AG04449 (cell line): ENCODE measurements at regions of chr19 and their contacts with region 1.

Region 1: DNA sequence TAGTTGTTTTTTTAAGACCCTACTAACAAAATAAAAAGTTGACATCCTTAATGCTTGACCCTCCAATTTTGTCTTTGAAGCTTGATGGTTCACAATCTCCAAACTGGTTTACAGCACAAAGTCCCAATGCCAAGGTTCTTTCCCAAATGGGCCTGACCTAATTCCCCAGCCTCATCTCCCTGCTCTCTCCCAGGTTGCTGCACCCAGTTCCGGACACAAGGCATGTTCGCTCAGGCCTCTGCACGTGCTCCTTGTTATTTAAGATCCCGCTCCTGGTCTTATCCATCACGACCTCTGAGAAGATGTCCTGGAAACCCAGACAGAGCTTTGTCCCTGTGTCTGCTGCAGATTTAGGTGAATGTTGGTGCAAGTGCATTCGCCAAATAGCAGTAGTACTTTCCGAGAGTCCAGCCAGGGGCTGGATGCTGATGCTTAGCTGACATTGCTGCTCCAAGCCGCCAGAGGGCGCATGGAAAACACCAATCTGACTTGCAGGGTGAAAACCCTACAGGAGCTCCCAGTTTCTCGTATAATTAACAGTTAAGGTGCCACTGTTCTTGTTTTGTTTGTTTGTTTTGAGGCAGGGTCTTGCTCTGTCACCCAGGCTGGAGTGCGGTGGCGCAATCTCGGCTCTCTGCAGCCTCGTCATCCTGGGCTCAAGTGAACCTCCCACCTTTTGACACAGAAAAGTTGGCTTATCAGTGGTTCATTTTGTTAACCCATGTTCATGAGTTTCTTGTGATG is 18.5 kb downstream of the LYPD3 start:
- DNase-seq: no peak
- H3K4me3 ChIP-seq: no peak overlapping the region
- CTCF ChIP-seq: peak; percentile 90

Region 2: GRCh38 chr19:43433358-43433673 is 13.6 kb before region 1 on chr19:
- CTCF ChIA-PET with region 1: interaction called, 52 read pairs
- POLR2A ChIA-PET with region 1: no interaction called
- DNase-seq: no peak
- H3K4me3 ChIP-seq: no peak overlapping the region
- CTCF ChIP-seq: no peak

Region 3: DNA sequence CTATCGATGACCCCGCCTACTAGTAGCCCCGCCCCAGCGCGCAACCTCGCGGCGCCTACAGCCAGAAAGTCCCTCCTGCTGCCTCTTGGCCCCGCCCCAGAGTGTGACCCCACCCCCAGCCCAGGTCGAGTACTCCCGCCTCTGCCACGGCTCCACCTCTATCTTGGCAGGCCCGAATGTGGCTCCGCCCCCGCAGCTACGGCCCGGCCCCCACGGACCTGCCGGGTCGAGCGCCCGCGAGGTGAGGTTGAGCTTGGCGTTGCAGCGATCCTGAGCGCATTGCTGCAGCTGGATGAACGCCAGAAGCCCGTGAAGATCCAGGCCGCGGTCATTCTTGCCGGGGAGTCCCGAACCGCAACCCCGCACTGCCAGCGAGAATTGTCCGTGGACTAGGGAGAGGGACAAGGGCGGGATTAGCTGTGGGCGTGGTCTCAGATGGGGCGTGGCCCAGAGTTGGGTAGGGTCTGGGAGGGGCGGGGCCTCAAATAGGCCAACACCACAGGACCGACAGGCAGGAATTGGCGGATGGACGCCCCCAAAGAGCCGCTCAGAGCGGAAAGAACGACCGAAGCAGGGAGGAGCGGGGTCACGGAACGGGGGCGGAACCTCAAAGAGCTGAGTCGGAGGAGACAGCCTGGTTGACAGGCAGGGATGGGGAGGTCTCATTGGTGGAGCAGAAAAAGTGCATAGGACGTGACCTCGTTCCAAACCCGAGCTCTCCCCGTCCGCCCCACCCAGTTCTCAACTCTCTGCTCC is 16.6 kb after region 1 on chr19:
- CTCF ChIA-PET with region 1: interaction called, 69 read pairs
- POLR2A ChIA-PET with region 1: no interaction called
- DNase-seq: no peak
- H3K4me3 ChIP-seq: peak overlapping the region; percentile 82
- CTCF ChIP-seq: no peak

Region 4: GRCh38 chr19:43495082-43495481 is 48.2 kb after region 1 on chr19:
- CTCF ChIA-PET with region 1: interaction called, 95 read pairs
- POLR2A ChIA-PET with region 1: no interaction called
- DNase-seq: no peak
- H3K4me3 ChIP-seq: no peak overlapping the region
- CTCF ChIP-seq: no peak

Region 5: GRCh38 chr19:43526884-43527859 is 80.3 kb after region 1 on chr19 and contains the start of gene ETHE1:
- CTCF ChIA-PET with region 1: interaction called, 609 read pairs
- POLR2A ChIA-PET with region 1: no interaction called
- DNase-seq: no peak
- H3K4me3 ChIP-seq: peak within 1 kb of the TSS; percentile 85
- CTCF ChIP-seq: no peak

Region 6: GRCh38 chr19:43595999-43596841 is 149.3 kb after region 1 on chr19 and contains the starts of genes IRGQ and ZNF576:
- CTCF ChIA-PET with region 1: interaction called, 33 read pairs
- POLR2A ChIA-PET with region 1: no interaction called
- DNase-seq: peak; percentile 90
- H3K4me3 ChIP-seq: peak within 1 kb of the TSS; percentile 79
- CTCF ChIP-seq: no peak